A673 (cell line): ENCODE measurements at regions of chr3 and their contacts with region 1.

Region 1: DNA sequence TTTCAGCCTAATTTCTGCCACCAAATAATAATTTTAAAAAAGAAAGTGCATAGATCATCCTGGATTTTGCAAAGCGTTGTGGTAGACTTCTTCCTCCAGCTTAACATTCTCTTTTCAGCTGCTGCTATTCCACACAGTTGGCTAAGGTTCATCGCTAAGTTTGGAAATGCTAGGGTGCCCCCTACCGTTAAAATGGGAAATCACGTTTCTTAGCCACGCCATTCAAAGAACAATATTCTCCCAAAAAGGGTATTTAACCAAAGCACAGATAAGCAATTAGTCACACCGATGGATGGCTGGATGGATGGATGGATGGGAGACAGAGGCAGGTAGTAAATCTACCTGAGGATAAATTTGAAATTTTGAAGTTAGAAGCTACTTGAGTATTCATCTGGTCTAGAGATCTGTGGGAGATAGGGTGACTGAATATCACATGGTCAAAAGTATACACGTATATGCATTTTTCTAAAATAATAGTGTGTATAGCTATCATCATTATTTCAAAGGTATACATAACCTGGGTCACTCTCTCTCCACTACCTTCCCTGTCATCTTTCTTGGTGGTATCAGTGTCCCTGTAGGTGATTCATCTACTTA is 67.2 kb downstream of the EFHB start:
- DNase-seq: peak; percentile 75
- H3K4me3 ChIP-seq: no peak overlapping the region
- H3K27ac ChIP-seq: no peak overlapping the region
- H3K4me1 ChIP-seq: no peaks in the 10 kb centered on the region
- H3K27me3 ChIP-seq: peaks cover 19% of the 10 kb centered on the region
- CTCF ChIP-seq: peak; percentile 86

Region 2: GRCh38 chr3:18559331-18559842 is 1307.5 kb before region 1 on chr3:
- CTCF ChIA-PET with region 1: no interaction called
- POLR2A ChIA-PET with region 1: no interaction called
- intact Hi-C with region 1: loop called (anchors 5 kb)
- DNase-seq: peak; percentile 71
- H3K4me3 ChIP-seq: no peak overlapping the region
- H3K27ac ChIP-seq: no peak overlapping the region
- H3K4me1 ChIP-seq: no peaks in the 10 kb centered on the region
- H3K27me3 ChIP-seq: no peaks in the 10 kb centered on the region
- CTCF ChIP-seq: peak; percentile 66

Region 3: GRCh38 chr3:19046440-19046839 is 820.4 kb before region 1 on chr3:
- CTCF ChIA-PET with region 1: no interaction called
- POLR2A ChIA-PET with region 1: no interaction called
- intact Hi-C with region 1: loop called (anchors 5 kb)
- DNase-seq: no peak
- H3K4me3 ChIP-seq: no peak overlapping the region
- H3K27ac ChIP-seq: no peak overlapping the region
- H3K4me1 ChIP-seq: no peaks in the 10 kb centered on the region
- H3K27me3 ChIP-seq: no peaks in the 10 kb centered on the region
- CTCF ChIP-seq: no peak

Region 4: GRCh38 chr3:19065027-19065426 is 801.8 kb before region 1 on chr3:
- CTCF ChIA-PET with region 1: no interaction called
- POLR2A ChIA-PET with region 1: no interaction called
- intact Hi-C with region 1: loop called (anchors 5 kb)
- DNase-seq: peak; percentile 3
- H3K4me3 ChIP-seq: no peak overlapping the region
- H3K27ac ChIP-seq: no peak overlapping the region
- H3K4me1 ChIP-seq: no peaks in the 10 kb centered on the region
- H3K27me3 ChIP-seq: no peaks in the 10 kb centered on the region
- CTCF ChIP-seq: peak; percentile 29; the same call in 1 of the 2 replicates

Region 5: GRCh38 chr3:19348929-19349564 is 517.8 kb before region 1 on chr3:
- CTCF ChIA-PET with region 1: interaction called, 8 read pairs
- POLR2A ChIA-PET with region 1: no interaction called
- intact Hi-C with region 1: loop called (anchors 2 kb)
- DNase-seq: peak; percentile 17
- H3K4me3 ChIP-seq: no peak overlapping the region
- H3K27ac ChIP-seq: no peak overlapping the region
- H3K4me1 ChIP-seq: no peaks in the 10 kb centered on the region
- H3K27me3 ChIP-seq: no peaks in the 10 kb centered on the region
- CTCF ChIP-seq: peak; percentile 72

Region 6: GRCh38 chr3:19645093-19645492 is 221.8 kb before region 1 on chr3:
- CTCF ChIA-PET with region 1: no interaction called
- POLR2A ChIA-PET with region 1: no interaction called
- intact Hi-C with region 1: no loop called
- DNase-seq: no peak
- H3K4me3 ChIP-seq: no peak overlapping the region
- H3K27ac ChIP-seq: no peak overlapping the region
- H3K4me1 ChIP-seq: no peaks in the 10 kb centered on the region
- H3K27me3 ChIP-seq: no peaks in the 10 kb centered on the region
- CTCF ChIP-seq: no peak

Region 7: GRCh38 chr3:19668163-19668562 is 198.7 kb before region 1 on chr3:
- CTCF ChIA-PET with region 1: no interaction called
- POLR2A ChIA-PET with region 1: no interaction called
- intact Hi-C with region 1: no loop called
- DNase-seq: no peak
- H3K4me3 ChIP-seq: no peak overlapping the region
- H3K27ac ChIP-seq: no peak overlapping the region
- H3K4me1 ChIP-seq: no peaks in the 10 kb centered on the region
- H3K27me3 ChIP-seq: no peaks in the 10 kb centered on the region
- CTCF ChIP-seq: no peak

Region 8: GRCh38 chr3:21297304-21297703 is 1430.5 kb after region 1 on chr3:
- CTCF ChIA-PET with region 1: interaction called, 11 read pairs
- POLR2A ChIA-PET with region 1: no interaction called
- intact Hi-C with region 1: no loop called
- DNase-seq: no peak
- H3K4me3 ChIP-seq: no peak overlapping the region
- H3K27ac ChIP-seq: no peak overlapping the region
- H3K4me1 ChIP-seq: no peaks in the 10 kb centered on the region
- H3K27me3 ChIP-seq: no peaks in the 10 kb centered on the region
- CTCF ChIP-seq: no peak